CD4-positive, alpha-beta memory T cell (primary cell): ENCODE measurements at regions of chr19 and their contacts with region 1.

Region 1: DNA sequence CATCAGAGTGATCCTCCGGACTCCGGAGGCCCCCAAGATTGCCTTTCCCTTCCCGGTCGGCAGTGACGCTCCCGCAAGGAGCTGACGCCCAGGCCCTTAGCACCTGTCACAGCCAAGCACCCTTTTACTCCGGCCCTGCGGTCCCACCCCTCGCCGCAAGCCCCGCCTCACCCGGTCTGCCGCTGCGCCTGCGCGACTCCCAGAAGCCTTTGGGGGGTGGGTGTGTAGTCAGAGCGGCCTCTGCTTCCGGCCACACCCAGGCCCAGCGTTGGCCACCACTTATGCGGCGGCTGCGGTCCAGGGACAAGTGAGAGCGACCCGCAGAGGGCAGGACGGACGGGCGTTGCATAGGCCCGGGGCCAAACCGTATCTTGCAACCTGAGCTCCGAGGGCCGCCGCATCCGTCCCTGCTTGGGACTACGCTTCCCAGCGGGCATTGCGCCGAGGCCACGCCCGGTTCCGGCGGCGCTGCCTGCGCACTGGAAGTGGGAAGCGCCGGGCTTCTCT is 441 bp upstream of the ZFP28 start:
- DNase-seq: peak; percentile 89 to 91 (median 90)
- H3K4me3 ChIP-seq: peak overlapping the region; percentile 63 to 83
- H3K4me3 Mint-ChIP-seq: peak overlapping the region; percentile 88 to 95 (median 91)
- H3K27ac ChIP-seq: peak overlapping the region; percentile 70
- H3K27ac Mint-ChIP-seq: peak overlapping the region; percentile 89 to 96 (median 94)
- H3K4me1 ChIP-seq: peaks cover 14% of the 10 kb centered on the region
- H3K4me1 Mint-ChIP-seq: peaks cover 7 to 24% (median 12%) of the 10 kb centered on the region in 4 donors
- H3K27me3 ChIP-seq: no peaks in the 10 kb centered on the region
- H3K27me3 Mint-ChIP-seq: peaks cover 0 to 2% of the 10 kb centered on the region in 2 donors

Region 2: GRCh38 chr19:56314562-56315077 is 223.7 kb before region 1 on chr19 and contains the start of gene ZSCAN5A:
- CTCF ChIA-PET with region 1: no interaction called
- POLR2A ChIA-PET with region 1: no interaction called
- intact Hi-C with region 1: loop called (anchors 1 kb)
- DNase-seq: peak; percentile 98 to 100 (median 99)
- H3K4me3 ChIP-seq: peak within 1 kb of the TSS; percentile 54 to 98
- H3K4me3 Mint-ChIP-seq: peak within 1 kb of the TSS; percentile 88 to 96 (median 92)
- H3K27ac ChIP-seq: peak within 1 kb of the TSS; percentile 95
- H3K27ac Mint-ChIP-seq: peak within 1 kb of the TSS; percentile 96 to 99 (median 98)
- H3K4me1 ChIP-seq: peaks cover 14% of the 10 kb centered on the region
- H3K4me1 Mint-ChIP-seq: peaks cover 6 to 32% (median 21%) of the 10 kb centered on the region in 4 donors
- H3K27me3 ChIP-seq: no peaks in the 10 kb centered on the region
- H3K27me3 Mint-ChIP-seq: no peaks in the 10 kb centered on the region
- total RNA-seq, gene ZSCAN5A: 12.2 to 14.6 TPM

Region 3: GRCh38 chr19:56403764-56404704 is 134.3 kb before region 1 on chr19 and contains the start of gene ZNF583:
- CTCF ChIA-PET with region 1: no interaction called
- POLR2A ChIA-PET with region 1: interaction called, 4 read pairs
- intact Hi-C with region 1: loop called (anchors 1 kb)
- DNase-seq: peak; percentile 90 to 94 (median 92)
- H3K4me3 ChIP-seq: peak within 1 kb of the TSS; percentile 77 to 96
- H3K4me3 Mint-ChIP-seq: peak within 1 kb of the TSS; percentile 93 to 99 (median 97)
- H3K27ac ChIP-seq: peak within 1 kb of the TSS; percentile 92
- H3K27ac Mint-ChIP-seq: peak within 1 kb of the TSS; percentile 88 to 99 (median 98)
- H3K4me1 ChIP-seq: peaks cover 21% of the 10 kb centered on the region
- H3K4me1 Mint-ChIP-seq: peaks cover 20 to 36% (median 26%) of the 10 kb centered on the region in 4 donors
- H3K27me3 ChIP-seq: no peaks in the 10 kb centered on the region
- H3K27me3 Mint-ChIP-seq: no peaks in the 10 kb centered on the region
- total RNA-seq, gene ZNF583: 9.2 to 14.4 TPM

Region 4: GRCh38 chr19:56507446-56508289 is 30.6 kb before region 1 on chr19 and contains the start of gene ZNF471:
- CTCF ChIA-PET with region 1: no interaction called
- POLR2A ChIA-PET with region 1: no interaction called
- intact Hi-C with region 1: loop called (anchors 1 kb)
- DNase-seq: peak; percentile 56 to 87 (median 84)
- H3K4me3 ChIP-seq: peak within 1 kb of the TSS in 1 of 2 donors; percentile 29
- H3K4me3 Mint-ChIP-seq: peak within 1 kb of the TSS in 1 of 8 donors; percentile 88
- H3K27ac ChIP-seq: peak within 1 kb of the TSS; percentile 61
- H3K27ac Mint-ChIP-seq: peak within 1 kb of the TSS in 4 of 7 donors; percentile 38 to 97 (median 94)
- H3K4me1 ChIP-seq: no peaks in the 10 kb centered on the region
- H3K4me1 Mint-ChIP-seq: peaks cover 0 to 10% (median 6%) of the 10 kb centered on the region in 4 donors
- H3K27me3 ChIP-seq: no peaks in the 10 kb centered on the region
- H3K27me3 Mint-ChIP-seq: peaks cover 0 to 3% of the 10 kb centered on the region in 2 donors
- total RNA-seq, gene ZNF471: 1.1 to 1.7 TPM

Region 5: GRCh38 chr19:56554272-56554869 is 16.1 kb after region 1 on chr19:
- CTCF ChIA-PET with region 1: no interaction called
- POLR2A ChIA-PET with region 1: no interaction called
- intact Hi-C with region 1: no loop called
- DNase-seq: no peak
- H3K4me3 ChIP-seq: no peak overlapping the region
- H3K4me3 Mint-ChIP-seq: no peak overlapping the region
- H3K27ac ChIP-seq: no peak overlapping the region
- H3K27ac Mint-ChIP-seq: no peak overlapping the region
- H3K4me1 ChIP-seq: no peaks in the 10 kb centered on the region
- H3K4me1 Mint-ChIP-seq: no peaks in the 10 kb centered on the region
- H3K27me3 ChIP-seq: no peaks in the 10 kb centered on the region
- H3K27me3 Mint-ChIP-seq: no peaks in the 10 kb centered on the region

Region 6: DNA sequence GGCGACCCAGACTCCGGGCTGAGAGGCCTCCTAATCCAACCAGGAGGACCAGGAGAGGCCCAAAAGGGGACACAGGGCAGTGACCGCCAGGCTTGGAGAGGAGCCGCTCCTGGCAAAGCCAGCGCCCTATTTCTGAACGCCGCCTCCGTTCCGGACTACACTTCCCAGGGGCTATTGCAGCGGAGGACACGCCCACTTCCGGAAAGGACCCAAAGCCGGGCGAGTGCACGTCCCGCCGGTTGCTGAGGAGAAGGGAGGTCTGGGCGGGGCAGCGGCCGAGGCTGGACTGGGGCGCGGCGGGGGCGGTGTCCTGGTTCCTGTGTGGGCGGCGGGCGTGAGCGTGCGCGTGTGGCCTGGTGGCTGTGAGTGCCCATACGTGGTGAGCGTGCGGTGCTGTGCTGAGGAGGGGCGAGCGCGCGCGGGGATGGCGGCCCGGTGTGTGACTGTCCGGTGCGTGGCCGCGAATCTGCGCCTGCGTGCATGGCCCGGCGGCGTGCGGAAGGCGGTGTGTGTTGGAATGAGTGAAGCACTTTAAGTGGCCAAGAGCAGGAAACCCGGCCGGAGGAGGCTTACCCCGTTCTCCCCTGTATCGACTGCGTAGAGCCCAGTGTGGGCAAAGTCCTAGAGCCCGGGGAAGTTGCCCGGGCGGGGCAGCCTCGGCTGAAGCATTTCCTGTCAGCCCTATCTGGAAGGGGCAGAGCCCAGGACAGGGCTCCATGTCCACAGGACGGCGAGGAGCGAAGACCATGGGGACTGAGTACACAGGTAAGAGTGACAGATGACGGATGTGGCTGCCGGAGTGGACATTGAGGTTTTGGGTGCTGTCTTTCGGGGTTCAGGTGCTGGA is 29.2 kb after region 1 on chr19 and contains the start of gene ZNF470:
- CTCF ChIA-PET with region 1: no interaction called
- POLR2A ChIA-PET with region 1: interaction called, 4 read pairs
- intact Hi-C with region 1: loop called (anchors 1 kb)
- DNase-seq: peak; percentile 81 to 86 (median 82)
- H3K4me3 ChIP-seq: peak within 1 kb of the TSS; percentile 58 to 96
- H3K4me3 Mint-ChIP-seq: peak within 1 kb of the TSS; percentile 90 to 99 (median 94)
- H3K27ac ChIP-seq: peak within 1 kb of the TSS; percentile 59
- H3K27ac Mint-ChIP-seq: peak within 1 kb of the TSS; percentile 60 to 94 (median 87)
- H3K4me1 ChIP-seq: peaks cover 13% of the 10 kb centered on the region
- H3K4me1 Mint-ChIP-seq: peaks cover 8 to 23% (median 14%) of the 10 kb centered on the region in 4 donors
- H3K27me3 ChIP-seq: no peaks in the 10 kb centered on the region
- H3K27me3 Mint-ChIP-seq: no peaks in the 10 kb centered on the region
- total RNA-seq, gene ZNF470: 4.9 to 5.0 TPM

Region 7: GRCh38 chr19:56594783-56595547 is 56.7 kb after region 1 on chr19 and contains the start of gene ZNF71:
- CTCF ChIA-PET with region 1: no interaction called
- POLR2A ChIA-PET with region 1: no interaction called
- intact Hi-C with region 1: loop called (anchors 1 kb)
- DNase-seq: peak; percentile 82 to 87 (median 83)
- H3K4me3 ChIP-seq: peak within 1 kb of the TSS; percentile 55 to 57
- H3K4me3 Mint-ChIP-seq: peak within 1 kb of the TSS; percentile 88 to 98 (median 93)
- H3K27ac ChIP-seq: peak within 1 kb of the TSS; percentile 63
- H3K27ac Mint-ChIP-seq: peak within 1 kb of the TSS; percentile 54 to 94 (median 91)
- H3K4me1 ChIP-seq: peaks cover 17% of the 10 kb centered on the region
- H3K4me1 Mint-ChIP-seq: peaks cover 12 to 22% (median 16%) of the 10 kb centered on the region in 4 donors
- H3K27me3 ChIP-seq: no peaks in the 10 kb centered on the region
- H3K27me3 Mint-ChIP-seq: peaks cover 0 to 2% of the 10 kb centered on the region in 2 donors
- total RNA-seq, gene ZNF71: 8.2 to 8.3 TPM